ENCODE measurements at regions of chr2 and their contacts with region 1.

Region 1: GRCh38 chr2:212686285-212686895 is 147.8 kb upstream of the ERBB4 start:
- DNase-seq: peak; percentile 16 to 70 (median 54)
- ATAC-seq: peak; percentile 42
- H3K4me3 ChIP-seq: no peak overlapping the region
- H3K4me3 Mint-ChIP-seq: no peak overlapping the region
- H3K27ac ChIP-seq: no peak overlapping the region
- H3K27ac Mint-ChIP-seq: no peak overlapping the region
- H3K4me1 ChIP-seq: no peaks in the 10 kb centered on the region
- H3K4me1 Mint-ChIP-seq: peaks cover 2% of the 10 kb centered on the region
- H3K27me3 ChIP-seq: no peaks in the 10 kb centered on the region
- H3K27me3 Mint-ChIP-seq: no peaks in the 10 kb centered on the region
- CTCF ChIP-seq: peak; percentile 93

Region 2: GRCh38 chr2:213934560-213934959 is 1248.2 kb after region 1 on chr2:
- CTCF ChIA-PET with region 1: no interaction called
- POLR2A ChIA-PET with region 1: no interaction called
- intact Hi-C with region 1: loop called (anchors 5 kb)
- DNase-seq: peak in 3 of 9 experiments; percentile 9 to 41 (median 27)
- ATAC-seq: no peak
- H3K4me3 ChIP-seq: no peak overlapping the region
- H3K4me3 Mint-ChIP-seq: no peak overlapping the region
- H3K27ac ChIP-seq: no peak overlapping the region
- H3K27ac Mint-ChIP-seq: no peak overlapping the region
- H3K4me1 ChIP-seq: no peaks in the 10 kb centered on the region
- H3K4me1 Mint-ChIP-seq: no peaks in the 10 kb centered on the region
- H3K27me3 ChIP-seq: no peaks in the 10 kb centered on the region
- H3K27me3 Mint-ChIP-seq: no peaks in the 10 kb centered on the region
- CTCF ChIP-seq: peak; percentile 56